ENCODE measurements at regions of chr5 and their contacts with region 1.

Region 1: GRCh38 chr5:180494060-180494509 is at the start of gene CNOT6:
- DNase-seq: peak; percentile 71 to 96
- H3K4me3 ChIP-seq: peak within 1 kb of the TSS; percentile 86
- H3K27ac ChIP-seq: peak within 1 kb of the TSS; percentile 64
- H3K4me1 ChIP-seq: peaks cover 21% of the 10 kb centered on the region
- H3K27me3 ChIP-seq: no peaks in the 10 kb centered on the region
- CTCF ChIP-seq: no peak
- total RNA-seq, gene CNOT6: 43.8 and 48.8 TPM in 2 replicates

Region 2: DNA sequence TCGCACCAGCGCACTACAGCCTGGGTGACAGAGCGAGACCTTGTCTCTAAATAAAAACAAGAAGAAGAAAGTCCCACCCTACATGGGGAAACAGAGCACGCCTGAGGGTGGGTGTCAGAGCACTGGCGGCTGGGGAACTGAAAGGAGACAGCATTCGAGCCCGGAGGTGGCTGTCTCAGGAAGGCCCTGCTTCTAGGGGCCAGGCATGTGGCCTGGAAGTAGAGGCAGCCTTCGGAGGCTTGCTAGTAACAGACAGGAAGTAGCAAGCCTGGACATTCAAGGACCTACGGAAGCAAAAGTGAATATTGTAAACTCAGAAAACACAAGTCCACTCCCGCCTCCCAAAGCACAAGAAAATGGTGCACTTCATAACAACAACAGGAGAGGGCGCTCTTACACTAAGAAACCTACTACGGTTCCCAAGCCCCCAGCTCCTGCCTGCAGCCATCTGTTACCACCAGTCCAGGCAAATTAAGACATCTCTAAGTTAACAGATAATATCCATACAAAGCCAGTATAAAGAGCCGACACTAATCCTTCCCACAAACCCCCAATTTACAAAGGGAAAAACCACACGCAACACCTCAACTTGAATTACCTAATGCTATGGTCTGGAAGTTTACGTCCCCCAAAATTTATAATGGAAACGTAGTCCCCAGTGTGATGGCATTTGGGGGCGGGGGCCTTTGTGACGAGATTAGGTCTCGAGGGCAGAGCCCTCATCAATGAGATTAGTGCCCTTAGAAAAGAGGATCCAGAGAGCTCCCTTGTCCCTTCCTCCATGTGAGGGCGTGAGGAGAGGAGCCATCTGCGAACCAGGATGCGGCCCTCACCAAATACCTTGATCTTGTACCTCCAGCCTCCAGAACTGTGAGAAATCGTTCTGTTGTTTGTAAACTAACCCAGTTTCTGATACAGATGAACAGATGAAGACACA is 292.8 kb before region 1 on chr5:
- CTCF ChIA-PET with region 1: no interaction called
- POLR2A ChIA-PET with region 1: no interaction called
- intact Hi-C with region 1: loop called (anchors 5 kb)
- DNase-seq: peak in 1 of 2 experiments; percentile 21
- H3K4me3 ChIP-seq: no peak overlapping the region
- H3K27ac ChIP-seq: no peak overlapping the region
- H3K4me1 ChIP-seq: no peaks in the 10 kb centered on the region
- H3K27me3 ChIP-seq: no peaks in the 10 kb centered on the region
- CTCF ChIP-seq: peak; percentile 60

Region 3: GRCh38 chr5:180540050-180540694 is 46.1 kb after region 1 on chr5:
- CTCF ChIA-PET with region 1: no interaction called
- POLR2A ChIA-PET with region 1: no interaction called
- intact Hi-C with region 1: loop called (anchors 1 kb)
- DNase-seq: no peak
- H3K4me3 ChIP-seq: no peak overlapping the region
- H3K27ac ChIP-seq: no peak overlapping the region
- H3K4me1 ChIP-seq: no peaks in the 10 kb centered on the region
- H3K27me3 ChIP-seq: no peaks in the 10 kb centered on the region
- CTCF ChIP-seq: no peak

Region 4: GRCh38 chr5:180658774-180659564 is 164.9 kb after region 1 on chr5:
- CTCF ChIA-PET with region 1: interaction called, 10 read pairs
- POLR2A ChIA-PET with region 1: no interaction called
- intact Hi-C with region 1: no loop called
- DNase-seq: no peak
- H3K4me3 ChIP-seq: no peak overlapping the region
- H3K27ac ChIP-seq: no peak overlapping the region
- H3K4me1 ChIP-seq: no peaks in the 10 kb centered on the region
- H3K27me3 ChIP-seq: peaks cover 68% of the 10 kb centered on the region
- CTCF ChIP-seq: no peak

Region 5: DNA sequence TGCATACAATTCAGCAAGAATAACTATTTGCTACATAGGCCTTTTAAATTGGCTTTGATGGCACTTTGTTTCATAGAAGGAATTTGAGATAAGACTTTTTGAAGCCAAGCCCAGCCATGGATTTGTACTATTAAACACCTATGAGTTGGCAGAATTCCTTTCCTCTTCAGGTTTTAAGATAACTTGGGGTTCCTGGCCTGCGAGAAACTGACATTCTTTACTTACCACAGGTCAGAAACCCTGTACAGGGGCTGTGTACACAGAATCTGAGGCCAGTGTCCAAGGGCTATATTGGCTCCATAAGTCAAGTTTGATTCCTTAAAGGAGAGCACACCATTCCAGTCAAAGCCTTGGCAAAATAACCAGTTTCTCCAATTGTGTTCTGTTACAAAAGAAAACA is 483.8 kb after region 1 on chr5:
- CTCF ChIA-PET with region 1: no interaction called
- POLR2A ChIA-PET with region 1: no interaction called
- intact Hi-C with region 1: no loop called
- DNase-seq: no peak
- H3K4me3 ChIP-seq: no peak overlapping the region
- H3K27ac ChIP-seq: no peak overlapping the region
- H3K4me1 ChIP-seq: no peaks in the 10 kb centered on the region
- H3K27me3 ChIP-seq: no peaks in the 10 kb centered on the region
- CTCF ChIP-seq: no peak

Measured in PC-9 (cell line).